ENCODE measurements at regions of chr18 and their contacts with region 1.

Region 1: GRCh38 chr18:50507120-50507590 is 52.7 kb upstream of the MAPK4 start:
- DNase-seq: peak; percentile 46 to 75
- ATAC-seq: peak; percentile 66
- H3K4me3 ChIP-seq: no peak overlapping the region
- H3K27ac ChIP-seq: no peak overlapping the region
- H3K4me1 ChIP-seq: no peaks in the 10 kb centered on the region
- H3K27me3 ChIP-seq: no peaks in the 10 kb centered on the region

Region 2: GRCh38 chr18:50659091-50660003 is 152.2 kb after region 1 on chr18:
- intact Hi-C with region 1: no loop called
- DNase-seq: peak in 1 of 2 donors; percentile 46
- ATAC-seq: peak; percentile 26
- H3K4me3 ChIP-seq: no peak overlapping the region
- H3K27ac ChIP-seq: peak overlapping the region in 1 of 2 donors; percentile 19
- H3K4me1 ChIP-seq: no peaks in the 10 kb centered on the region
- H3K27me3 ChIP-seq: no peaks in the 10 kb centered on the region

Region 3: GRCh38 chr18:50716902-50717301 is 209.7 kb after region 1 on chr18:
- intact Hi-C with region 1: loop called in 1 of 2 experiments (anchors 10 kb)
- DNase-seq: no peak
- ATAC-seq: no peak
- H3K4me3 ChIP-seq: no peak overlapping the region
- H3K27ac ChIP-seq: no peak overlapping the region
- H3K4me1 ChIP-seq: no peaks in the 10 kb centered on the region
- H3K27me3 ChIP-seq: no peaks in the 10 kb centered on the region

Region 4: DNA sequence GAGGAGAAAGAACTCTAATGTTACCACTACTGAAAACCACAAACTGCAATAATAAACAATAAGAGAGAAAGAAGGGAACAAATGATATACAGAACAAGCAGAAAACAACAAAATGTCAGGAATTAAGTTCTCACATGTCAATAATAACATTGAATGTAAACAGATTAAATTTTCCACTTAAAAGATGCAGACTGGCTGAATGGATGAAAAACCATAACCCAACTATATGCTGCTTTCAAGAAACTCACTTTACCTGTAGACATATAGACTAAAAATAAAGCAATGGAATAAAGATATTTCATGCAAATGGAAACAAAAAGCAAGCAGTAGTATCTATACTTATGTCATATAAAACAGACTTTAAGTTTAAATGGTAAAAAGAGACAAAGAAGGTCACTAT is 262.3 kb after region 1 on chr18:
- intact Hi-C with region 1: no loop called
- DNase-seq: no peak
- ATAC-seq: no peak
- H3K4me3 ChIP-seq: no peak overlapping the region
- H3K27ac ChIP-seq: no peak overlapping the region
- H3K4me1 ChIP-seq: no peaks in the 10 kb centered on the region
- H3K27me3 ChIP-seq: no peaks in the 10 kb centered on the region

Region 5: DNA sequence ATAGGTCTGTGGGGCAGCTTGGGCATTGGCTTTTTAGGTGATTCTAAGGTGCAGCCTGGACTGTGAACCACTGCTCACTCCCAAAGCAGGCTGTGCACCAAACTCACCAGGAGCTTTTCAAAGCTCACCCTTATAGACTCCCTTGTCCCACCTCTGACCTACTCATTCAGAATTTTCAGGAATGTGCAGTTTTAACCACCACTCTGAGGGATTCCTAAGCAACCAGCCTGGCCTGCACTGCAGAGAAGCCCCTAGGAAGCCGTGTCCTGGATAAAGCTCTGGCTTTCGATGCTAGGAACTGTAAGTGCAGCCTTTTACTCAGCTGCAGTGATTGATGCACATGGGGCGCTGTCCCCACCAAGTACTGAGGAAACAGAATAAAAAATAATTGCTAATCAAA is 279.7 kb after region 1 on chr18:
- intact Hi-C with region 1: loop called (anchors 2 kb)
- DNase-seq: no peak
- ATAC-seq: no peak
- H3K4me3 ChIP-seq: no peak overlapping the region
- H3K27ac ChIP-seq: no peak overlapping the region
- H3K4me1 ChIP-seq: no peaks in the 10 kb centered on the region
- H3K27me3 ChIP-seq: no peaks in the 10 kb centered on the region

Measured in aorta (tissue), 5 donors.